Calu3 (cell line): ENCODE measurements at regions of chr1 and their contacts with region 1.

Region 1: DNA sequence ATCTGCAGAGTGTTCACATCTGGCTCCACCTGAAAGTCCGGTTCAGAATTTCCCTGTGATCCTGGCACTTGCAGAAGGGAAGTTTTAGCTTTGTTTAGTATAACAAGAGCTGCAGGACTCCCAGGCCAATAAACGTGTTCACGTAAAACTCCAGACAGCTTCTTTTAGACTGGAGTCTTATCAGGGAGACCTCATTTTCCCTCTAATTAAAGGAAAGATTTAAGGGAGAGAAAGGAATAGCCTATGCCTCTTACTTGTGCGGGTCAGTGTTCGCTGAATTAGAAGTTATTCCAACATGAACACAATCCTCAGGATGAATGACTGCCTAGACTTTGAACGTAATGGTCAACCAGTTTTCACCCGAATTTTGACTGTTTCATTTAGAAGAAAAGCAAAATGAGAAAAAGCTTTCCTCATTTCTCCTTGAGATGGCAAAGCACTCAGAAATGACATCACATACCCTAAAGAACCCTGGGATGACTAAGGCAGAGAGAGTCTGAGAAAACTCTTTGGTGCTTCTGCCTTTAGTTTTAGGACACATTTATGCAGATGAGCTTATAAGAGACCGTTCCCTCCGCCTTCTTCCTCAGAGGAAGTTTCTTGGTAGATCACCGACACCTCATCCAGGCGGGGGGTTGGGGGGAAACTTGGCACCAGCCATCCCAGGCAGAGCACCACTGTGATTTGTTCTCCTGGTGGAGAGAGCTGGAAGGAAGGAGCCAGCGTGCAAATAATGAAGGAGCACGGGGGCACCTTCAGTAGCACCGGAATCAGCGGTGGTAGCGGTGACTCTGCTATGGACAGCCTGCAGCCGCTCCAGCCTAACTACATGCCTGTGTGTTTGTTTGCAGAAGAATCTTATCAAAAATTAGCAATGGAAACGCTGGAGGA is 202.1 kb upstream of the SGIP1 start:
- DNase-seq: peak; percentile 67
- H3K4me3 Mint-ChIP-seq: peak overlapping the region; percentile 74
- H3K27ac Mint-ChIP-seq: peak overlapping the region; percentile 83
- H3K4me1 Mint-ChIP-seq: peaks cover 9% of the 10 kb centered on the region
- H3K27me3 Mint-ChIP-seq: no peaks in the 10 kb centered on the region
- CTCF ChIP-seq: no peak

Region 2: GRCh38 chr1:64933296-64934070 is 1398.4 kb before region 1 on chr1:
- CTCF ChIA-PET with region 1: no interaction called
- intact Hi-C with region 1: no loop called
- DNase-seq: no peak
- H3K4me3 Mint-ChIP-seq: no peak overlapping the region
- H3K27ac Mint-ChIP-seq: no peak overlapping the region
- H3K4me1 Mint-ChIP-seq: peaks cover 18% of the 10 kb centered on the region
- H3K27me3 Mint-ChIP-seq: no peaks in the 10 kb centered on the region
- CTCF ChIP-seq: no peak

Region 3: DNA sequence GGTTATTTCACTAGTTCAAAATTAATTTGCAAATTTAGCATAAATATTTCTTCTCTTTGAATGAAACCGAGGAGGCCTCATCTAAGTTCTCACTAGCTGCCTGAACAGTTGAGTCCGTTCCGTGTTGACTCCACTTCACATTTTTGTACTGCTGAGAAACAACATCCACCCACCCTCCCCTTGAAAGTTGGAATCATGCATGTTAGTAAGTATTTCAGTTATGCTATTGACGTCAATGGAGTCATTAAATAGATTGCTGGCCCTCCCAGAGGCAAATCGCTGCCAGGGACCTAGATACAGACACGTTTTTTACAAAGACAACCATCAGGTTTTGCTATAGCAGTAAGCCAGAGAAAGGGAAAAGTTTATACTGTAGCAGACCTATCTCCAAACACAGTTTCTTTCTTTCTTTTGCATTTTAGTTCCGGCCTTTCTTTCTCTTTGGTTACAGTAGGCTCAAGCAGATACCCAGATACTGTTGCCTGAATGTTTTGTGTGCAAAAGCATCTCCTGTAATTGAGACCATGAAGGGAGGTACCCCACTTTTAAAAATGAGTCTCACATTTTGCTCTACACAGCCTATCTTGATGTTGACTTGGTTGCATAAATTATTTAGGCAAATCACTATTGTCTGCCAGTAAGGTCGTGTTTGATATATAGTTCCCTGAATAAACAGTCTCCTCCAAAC is 60.5 kb before region 1 on chr1:
- CTCF ChIA-PET with region 1: no interaction called
- intact Hi-C with region 1: loop called (anchors 1 kb)
- DNase-seq: peak; percentile 75
- H3K4me3 Mint-ChIP-seq: peak overlapping the region; percentile 38
- H3K27ac Mint-ChIP-seq: peak overlapping the region; percentile 72
- H3K4me1 Mint-ChIP-seq: peaks cover 38% of the 10 kb centered on the region
- H3K27me3 Mint-ChIP-seq: no peaks in the 10 kb centered on the region
- CTCF ChIP-seq: no peak

Region 4: GRCh38 chr1:66436378-66437145 is 104.7 kb after region 1 on chr1:
- CTCF ChIA-PET with region 1: interaction called, 11 read pairs
- intact Hi-C with region 1: loop called (anchors 5 kb)
- DNase-seq: peak; percentile 48
- H3K4me3 Mint-ChIP-seq: no peak overlapping the region
- H3K27ac Mint-ChIP-seq: peak overlapping the region; percentile 24
- H3K4me1 Mint-ChIP-seq: peaks cover 37% of the 10 kb centered on the region
- H3K27me3 Mint-ChIP-seq: no peaks in the 10 kb centered on the region
- CTCF ChIP-seq: peak; percentile 30